Endothelial cell of umbilical vein (primary cell): ENCODE measurements at regions of chr18 and their contacts with region 1.

Region 1: DNA sequence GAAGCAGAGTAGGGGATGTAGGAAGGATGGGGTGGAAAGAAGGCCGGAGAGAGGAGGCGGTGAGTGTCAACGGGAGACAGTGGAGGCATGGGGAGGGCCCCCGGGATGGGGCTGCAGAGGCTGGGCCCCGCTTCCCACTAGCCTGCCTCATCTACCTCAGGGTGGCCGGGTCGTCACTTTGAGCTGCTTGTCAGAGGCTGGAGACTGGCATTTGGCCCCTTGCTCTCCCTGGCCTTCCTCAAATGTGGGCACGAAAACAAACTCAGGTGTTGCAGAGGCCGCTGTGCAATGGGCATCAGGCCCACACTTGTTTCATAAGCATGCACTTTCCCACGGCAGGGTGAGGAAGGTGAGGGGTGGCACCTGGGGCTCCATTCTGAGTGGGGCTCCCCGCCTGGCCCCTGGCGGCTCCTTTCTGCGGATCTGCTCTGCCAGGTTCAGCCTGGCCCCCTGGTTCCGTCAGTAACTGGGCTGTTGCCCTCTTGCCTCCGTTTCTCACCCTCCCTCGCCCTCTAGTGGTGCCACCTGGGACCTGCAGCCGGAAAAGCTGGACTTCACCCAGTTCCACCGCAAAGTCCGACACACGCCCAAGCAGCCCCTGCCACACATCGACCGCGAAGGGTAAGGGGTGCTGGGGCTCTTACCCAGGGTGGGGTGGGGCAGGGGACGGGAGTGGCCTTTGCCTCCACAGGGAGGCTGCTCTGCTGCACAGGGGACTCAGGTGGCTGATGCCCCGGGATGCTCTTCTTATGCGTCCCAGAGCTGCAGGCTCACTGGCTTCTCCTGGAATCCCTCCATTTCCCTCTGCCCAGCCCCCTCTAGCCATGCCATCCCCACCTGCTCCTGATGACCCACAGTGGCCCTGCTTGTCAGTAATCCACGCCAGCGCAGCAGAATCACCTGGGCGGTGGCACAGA is 125.4 kb downstream of the CTIF start:
- DNase-seq: peak; percentile 57
- H3K4me3 ChIP-seq: no peak overlapping the region
- H3K27ac ChIP-seq: no peak overlapping the region
- H3K4me1 ChIP-seq: no peaks in the 10 kb centered on the region
- H3K27me3 ChIP-seq: no peaks in the 10 kb centered on the region
- CTCF ChIP-seq: peak; percentile 84 to 96
- POLR2A ChIP-seq: no peak

Region 2: DNA sequence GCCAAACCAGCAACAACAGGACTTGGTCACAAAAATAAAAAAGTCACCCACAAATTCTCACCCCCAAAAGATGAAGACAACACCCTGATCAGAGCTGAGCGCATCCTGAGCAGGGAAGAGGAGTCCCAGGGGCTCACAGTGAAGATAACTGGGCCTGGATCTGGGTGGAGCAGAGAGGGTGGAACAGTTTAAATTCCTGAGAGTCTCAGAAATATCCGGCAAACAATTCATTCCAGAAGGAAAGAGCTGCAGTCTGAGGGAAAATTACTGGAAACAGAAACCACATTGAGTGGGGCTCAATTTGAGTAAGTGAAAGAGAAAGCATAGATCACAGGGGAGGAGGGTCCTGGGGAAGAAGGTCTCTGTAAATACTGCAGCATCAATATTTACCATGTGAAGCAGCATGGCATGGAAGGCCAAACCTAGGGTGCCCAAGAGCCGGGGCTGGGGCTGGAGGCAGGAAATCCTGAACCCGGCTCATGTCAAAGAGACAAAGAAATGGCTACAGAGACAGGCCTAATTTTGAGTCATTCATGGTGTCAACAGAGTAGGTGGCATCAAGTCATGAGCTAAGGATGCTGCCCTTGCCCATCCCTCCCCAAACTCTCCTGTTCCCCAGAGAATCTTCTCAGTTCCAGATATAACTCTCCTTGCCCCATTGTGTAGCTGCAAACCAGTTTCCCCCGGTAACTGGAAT is 193.6 kb before region 1 on chr18:
- CTCF ChIA-PET with region 1: interaction called, 107 read pairs
- POLR2A ChIA-PET with region 1: no interaction called
- dilution Hi-C with region 1: no loop called
- intact Hi-C with region 1: no loop called
- DNase-seq: no peak
- H3K4me3 ChIP-seq: no peak overlapping the region
- H3K27ac ChIP-seq: no peak overlapping the region
- H3K4me1 ChIP-seq: no peaks in the 10 kb centered on the region
- H3K27me3 ChIP-seq: peaks cover 12 to 29% of the 10 kb centered on the region in 2 experiments
- CTCF ChIP-seq: no peak
- POLR2A ChIP-seq: no peak

Region 3: GRCh38 chr18:48475635-48476549 is 188.3 kb before region 1 on chr18:
- CTCF ChIA-PET with region 1: interaction called, 107 read pairs
- POLR2A ChIA-PET with region 1: no interaction called
- dilution Hi-C with region 1: no loop called
- intact Hi-C with region 1: loop called (anchors 1 kb)
- DNase-seq: peak; percentile 78
- H3K4me3 ChIP-seq: no peak overlapping the region
- H3K27ac ChIP-seq: no peak overlapping the region
- H3K4me1 ChIP-seq: peaks cover 2% of the 10 kb centered on the region
- H3K27me3 ChIP-seq: peaks cover 6 to 11% of the 10 kb centered on the region in 2 experiments
- CTCF ChIP-seq: peak; percentile 80 to 86
- POLR2A ChIP-seq: no peak

Region 4: DNA sequence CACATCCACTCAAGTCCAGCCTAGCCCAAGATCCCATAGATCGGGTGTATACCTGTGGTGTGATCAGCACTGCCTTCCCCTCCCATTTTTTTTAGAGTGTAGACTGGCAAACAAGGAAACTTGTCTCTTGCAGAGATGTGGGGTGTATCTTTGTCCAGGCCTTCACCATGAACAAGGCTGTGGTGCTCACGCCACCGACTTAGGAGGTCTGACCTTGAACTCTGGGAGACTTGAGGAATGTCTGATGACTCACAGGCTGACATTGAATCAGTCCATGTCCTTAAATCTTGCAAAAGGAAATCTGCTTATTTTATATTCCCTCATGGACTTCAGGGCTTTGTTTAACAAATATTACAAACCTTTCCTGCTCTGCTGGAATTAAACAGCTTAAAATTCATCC is 129.8 kb before region 1 on chr18:
- CTCF ChIA-PET with region 1: no interaction called
- POLR2A ChIA-PET with region 1: no interaction called
- dilution Hi-C with region 1: no loop called
- intact Hi-C with region 1: no loop called
- DNase-seq: peak; percentile 19
- H3K4me3 ChIP-seq: no peak overlapping the region
- H3K27ac ChIP-seq: no peak overlapping the region
- H3K4me1 ChIP-seq: peaks cover 22% of the 10 kb centered on the region
- H3K27me3 ChIP-seq: no peaks in the 10 kb centered on the region
- CTCF ChIP-seq: no peak
- POLR2A ChIP-seq: no peak

Region 5: GRCh38 chr18:48545757-48546321 is 118.3 kb before region 1 on chr18:
- CTCF ChIA-PET with region 1: interaction called, 11 read pairs
- POLR2A ChIA-PET with region 1: no interaction called
- dilution Hi-C with region 1: no loop called
- intact Hi-C with region 1: no loop called
- DNase-seq: peak; percentile 92
- H3K4me3 ChIP-seq: no peak overlapping the region
- H3K27ac ChIP-seq: peak overlapping the region; percentile 85
- H3K4me1 ChIP-seq: peaks cover 33% of the 10 kb centered on the region
- H3K27me3 ChIP-seq: no peaks in the 10 kb centered on the region
- CTCF ChIP-seq: no peak
- POLR2A ChIP-seq: no peak

Region 6: DNA sequence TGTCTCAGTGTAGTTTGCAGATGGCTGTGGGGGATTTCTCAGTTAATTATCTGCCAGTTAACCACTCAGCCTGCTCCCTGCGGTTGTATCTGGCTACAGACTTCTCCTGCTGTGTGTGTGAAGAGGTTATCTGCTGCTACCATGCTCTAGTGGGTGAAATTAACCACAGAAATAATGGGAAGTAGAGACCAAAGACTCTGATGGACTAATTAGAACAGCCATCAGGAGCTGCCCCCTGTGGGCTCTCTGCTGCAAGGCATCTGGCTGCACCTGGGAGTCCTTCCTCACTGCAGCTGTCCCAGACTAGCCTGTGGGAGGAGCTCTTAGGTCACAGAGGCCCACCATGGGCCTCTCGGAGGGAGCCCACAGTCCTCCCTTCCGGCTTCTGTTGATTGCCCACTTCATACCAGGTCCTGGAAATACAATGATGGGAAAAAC is 58.8 kb before region 1 on chr18:
- CTCF ChIA-PET with region 1: interaction called, 5 read pairs
- POLR2A ChIA-PET with region 1: no interaction called
- dilution Hi-C with region 1: no loop called
- intact Hi-C with region 1: loop called (anchors 5 kb)
- DNase-seq: peak; percentile 48
- H3K4me3 ChIP-seq: no peak overlapping the region
- H3K27ac ChIP-seq: no peak overlapping the region
- H3K4me1 ChIP-seq: no peaks in the 10 kb centered on the region
- H3K27me3 ChIP-seq: no peaks in the 10 kb centered on the region
- CTCF ChIP-seq: peak; percentile 45 to 62
- POLR2A ChIP-seq: no peak

Region 7: DNA sequence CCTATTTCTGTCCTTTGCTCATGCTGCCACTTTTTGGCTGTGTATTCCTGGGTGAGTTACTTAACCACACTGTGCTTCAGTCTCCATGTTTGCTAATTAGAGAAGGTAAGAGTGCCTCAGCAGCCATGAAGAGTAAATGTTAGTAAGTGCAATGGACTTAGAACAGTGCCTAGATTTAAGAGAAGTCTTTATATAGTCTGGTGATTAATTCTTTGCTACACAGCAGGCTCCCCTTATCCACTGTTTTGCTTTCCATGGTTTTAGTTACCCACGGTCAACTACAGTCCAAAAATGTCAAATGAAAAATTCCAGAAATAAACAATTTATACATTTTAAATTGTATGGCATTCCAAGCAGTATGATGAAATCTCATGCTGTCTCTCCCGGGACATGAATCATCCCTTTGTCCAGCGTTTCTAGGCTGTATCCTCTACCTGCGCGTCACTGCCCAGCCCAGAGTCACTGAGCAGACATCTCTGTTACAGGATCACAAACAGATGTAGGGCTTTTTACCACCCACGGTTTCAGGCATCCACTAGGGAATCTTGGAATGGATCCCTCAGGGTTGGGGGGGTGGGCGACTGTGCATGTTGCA is 34.4 kb before region 1 on chr18:
- CTCF ChIA-PET with region 1: interaction called, 7 read pairs
- POLR2A ChIA-PET with region 1: no interaction called
- dilution Hi-C with region 1: no loop called
- intact Hi-C with region 1: loop called (anchors 5 kb)
- DNase-seq: peak; percentile 49
- H3K4me3 ChIP-seq: no peak overlapping the region
- H3K27ac ChIP-seq: peak overlapping the region; percentile 66
- H3K4me1 ChIP-seq: peaks cover 16% of the 10 kb centered on the region
- H3K27me3 ChIP-seq: no peaks in the 10 kb centered on the region
- CTCF ChIP-seq: no peak
- POLR2A ChIP-seq: no peak

Region 8: GRCh38 chr18:49510393-49511115 is 846.4 kb after region 1 on chr18:
- CTCF ChIA-PET with region 1: no interaction called
- POLR2A ChIA-PET with region 1: no interaction called
- dilution Hi-C with region 1: no loop called
- intact Hi-C with region 1: no loop called
- DNase-seq: peak; percentile 51
- H3K4me3 ChIP-seq: no peak overlapping the region
- H3K27ac ChIP-seq: no peak overlapping the region
- H3K4me1 ChIP-seq: no peaks in the 10 kb centered on the region
- H3K27me3 ChIP-seq: peaks cover 3 to 4% of the 10 kb centered on the region in 2 experiments
- CTCF ChIP-seq: peak; percentile 74 to 81
- POLR2A ChIP-seq: no peak